A549 (cell line): ENCODE measurements at regions of chr11 and their contacts with region 1.

Region 1: DNA sequence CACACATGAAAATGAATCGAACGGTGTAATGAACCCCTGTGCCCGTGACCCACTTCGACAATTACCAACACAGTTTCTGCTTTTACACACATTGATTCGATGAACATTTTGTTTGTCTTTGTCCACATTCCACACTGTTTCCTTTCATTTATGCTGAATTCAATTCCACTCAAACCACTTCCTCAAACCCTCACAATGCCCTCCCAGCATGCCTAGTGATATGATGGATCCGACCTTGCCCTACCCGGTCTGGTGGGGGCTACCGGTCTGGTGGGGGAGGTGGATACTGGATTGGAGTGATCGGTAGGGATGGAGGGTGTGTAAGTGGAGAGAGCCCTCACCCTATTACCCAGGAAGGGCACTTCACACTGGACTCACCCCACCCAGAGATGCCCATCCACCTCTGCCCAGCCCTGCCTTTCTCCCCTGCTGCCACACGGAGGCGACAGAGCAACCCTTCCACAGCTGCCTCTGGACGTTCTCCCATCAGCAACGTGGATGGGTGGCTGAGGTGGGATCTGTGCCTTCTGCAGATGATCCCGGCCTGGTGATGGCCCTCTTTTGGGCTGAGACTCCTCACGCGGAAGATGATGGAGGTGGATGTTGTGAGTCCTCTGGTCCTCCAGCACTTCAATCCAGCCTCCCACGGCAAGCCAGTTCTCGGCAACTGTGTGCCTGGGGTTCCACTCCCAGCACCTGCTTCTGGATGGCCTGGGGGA is 33.0 kb upstream of the P2RY2 start:
- DNase-seq: peak; percentile 76 to 91
- ATAC-seq: peak; percentile 84 to 93
- H3K4me3 ChIP-seq: no peak overlapping the region
- H3K27ac ChIP-seq: peak overlapping the region; percentile 74 to 84
- H3K4me1 ChIP-seq: peaks cover 29% of the 10 kb centered on the region
- CTCF ChIP-seq: peak; percentile 80
- EP300 ChIP-seq: no peak
- POLR2A ChIP-seq: no peak
- RAD21 ChIP-seq: peak; percentile 79 to 90

Region 2: GRCh38 chr11:73141848-73142286 is 43.2 kb before region 1 on chr11:
- CTCF ChIA-PET with region 1: interaction called, 10 read pairs
- POLR2A ChIA-PET with region 1: interaction called, 3 read pairs
- DNase-seq: peak; percentile 56 to 73
- ATAC-seq: peak; percentile 65 to 70
- H3K4me3 ChIP-seq: peak overlapping the region; percentile 97
- H3K27ac ChIP-seq: peak overlapping the region; percentile 92 to 96
- H3K4me1 ChIP-seq: peaks cover 16% of the 10 kb centered on the region
- CTCF ChIP-seq: no peak
- EP300 ChIP-seq: no peak
- POLR2A ChIP-seq: peak; percentile 52; the same call in 1 of the 2 replicates
- RAD21 ChIP-seq: no peak

Region 3: DNA sequence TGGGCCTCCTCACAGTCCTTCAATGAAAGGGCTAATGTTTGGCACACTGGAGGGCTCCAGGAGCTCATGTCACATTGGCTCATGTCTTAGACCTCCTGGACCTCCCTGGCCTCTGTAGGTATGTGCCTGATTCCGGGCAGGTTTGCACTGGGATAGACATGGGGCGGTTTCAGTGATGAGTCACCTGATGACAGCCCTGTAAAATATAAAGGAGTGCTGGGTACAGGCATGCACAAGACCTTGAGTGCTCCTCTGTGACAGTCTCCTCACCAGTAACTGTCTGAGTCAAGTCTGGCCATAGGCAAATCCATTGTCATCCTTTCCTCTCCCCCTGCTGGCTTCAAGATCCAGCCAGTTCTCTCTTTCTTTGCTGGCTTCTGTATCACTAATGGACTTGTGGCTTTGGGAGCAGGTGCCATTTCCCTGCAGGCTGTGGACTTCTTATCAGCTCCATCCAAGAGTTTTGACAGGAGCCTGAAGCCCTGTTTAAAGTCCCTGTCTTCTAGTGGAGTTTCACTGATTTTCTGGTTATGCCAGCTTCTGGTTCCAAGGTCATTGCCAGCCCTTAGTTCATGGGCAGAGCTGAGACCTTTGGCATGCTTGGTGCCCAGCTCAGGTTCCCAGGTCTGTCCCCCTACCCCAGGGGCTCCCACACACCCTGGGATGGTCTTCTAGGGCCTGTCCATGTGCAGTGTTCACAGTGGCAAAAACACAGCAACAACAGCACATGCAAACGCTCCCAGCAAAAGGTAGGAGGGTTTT is 10.3 kb after region 1 on chr11:
- CTCF ChIA-PET with region 1: interaction called, 18 read pairs
- POLR2A ChIA-PET with region 1: no interaction called
- DNase-seq: peak; percentile 64 to 82
- ATAC-seq: peak; percentile 77 to 79
- H3K4me3 ChIP-seq: no peak overlapping the region
- H3K27ac ChIP-seq: peak overlapping the region; percentile 67 to 78
- H3K4me1 ChIP-seq: peaks cover 63% of the 10 kb centered on the region
- CTCF ChIP-seq: no peak
- EP300 ChIP-seq: no peak
- POLR2A ChIP-seq: no peak
- RAD21 ChIP-seq: peak in 1 of 2 experiments; percentile 1; a peak in 1 of 5 replicates

Region 4: DNA sequence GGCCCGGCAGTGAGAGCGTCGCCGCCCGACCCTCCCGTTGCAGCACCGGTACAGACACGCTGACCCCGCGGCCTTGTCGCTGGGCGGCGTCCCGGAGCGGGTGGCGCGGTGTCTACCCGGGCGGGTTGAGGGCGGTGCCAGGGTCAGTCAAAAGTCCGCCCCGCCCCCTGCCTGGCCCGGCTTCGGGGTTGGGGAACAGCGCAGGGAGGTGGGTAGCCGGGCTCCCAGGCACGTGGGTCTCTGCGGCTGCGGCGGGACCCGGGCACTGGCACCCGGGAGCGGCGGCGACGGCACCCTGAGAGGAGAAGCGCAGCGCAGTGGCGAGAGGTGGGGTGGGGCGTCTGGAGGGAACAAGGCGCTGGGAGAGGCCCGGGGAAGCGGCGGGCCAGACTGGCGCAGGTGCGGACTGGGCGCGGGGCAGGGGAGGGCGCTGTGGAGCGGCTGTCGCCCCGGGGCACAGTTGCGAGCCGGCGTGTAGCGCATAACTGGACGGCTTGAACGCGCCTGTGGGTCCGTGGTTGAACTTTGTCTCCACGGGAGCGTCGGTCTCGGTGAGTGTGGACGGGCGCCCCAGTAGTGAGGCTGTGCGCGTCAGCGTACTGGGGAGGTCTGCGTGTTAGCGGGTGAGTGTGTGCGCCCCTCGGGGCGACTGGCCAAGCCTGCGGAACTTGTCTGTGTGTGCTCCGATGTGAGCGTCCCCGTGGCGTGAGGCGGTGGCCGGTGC is 33.2 kb after region 1 on chr11 and contains the start of gene P2RY2:
- CTCF ChIA-PET with region 1: interaction called, 21 read pairs
- POLR2A ChIA-PET with region 1: no interaction called
- DNase-seq: peak; percentile 72 to 82
- ATAC-seq: peak; percentile 90 to 94
- H3K4me3 ChIP-seq: peak within 1 kb of the TSS; percentile 43
- H3K27ac ChIP-seq: peak within 1 kb of the TSS; percentile 68 to 91
- H3K4me1 ChIP-seq: peaks cover 16% of the 10 kb centered on the region
- CTCF ChIP-seq: peak; percentile 74
- EP300 ChIP-seq: no peak
- POLR2A ChIP-seq: peak; percentile 79
- RAD21 ChIP-seq: peak in 1 of 2 experiments; percentile 31; a peak in 3 of 5 replicates
- polyA plus RNA-seq, gene P2RY2: 3.7 and 5.2 TPM in 2 replicates

Region 5: DNA sequence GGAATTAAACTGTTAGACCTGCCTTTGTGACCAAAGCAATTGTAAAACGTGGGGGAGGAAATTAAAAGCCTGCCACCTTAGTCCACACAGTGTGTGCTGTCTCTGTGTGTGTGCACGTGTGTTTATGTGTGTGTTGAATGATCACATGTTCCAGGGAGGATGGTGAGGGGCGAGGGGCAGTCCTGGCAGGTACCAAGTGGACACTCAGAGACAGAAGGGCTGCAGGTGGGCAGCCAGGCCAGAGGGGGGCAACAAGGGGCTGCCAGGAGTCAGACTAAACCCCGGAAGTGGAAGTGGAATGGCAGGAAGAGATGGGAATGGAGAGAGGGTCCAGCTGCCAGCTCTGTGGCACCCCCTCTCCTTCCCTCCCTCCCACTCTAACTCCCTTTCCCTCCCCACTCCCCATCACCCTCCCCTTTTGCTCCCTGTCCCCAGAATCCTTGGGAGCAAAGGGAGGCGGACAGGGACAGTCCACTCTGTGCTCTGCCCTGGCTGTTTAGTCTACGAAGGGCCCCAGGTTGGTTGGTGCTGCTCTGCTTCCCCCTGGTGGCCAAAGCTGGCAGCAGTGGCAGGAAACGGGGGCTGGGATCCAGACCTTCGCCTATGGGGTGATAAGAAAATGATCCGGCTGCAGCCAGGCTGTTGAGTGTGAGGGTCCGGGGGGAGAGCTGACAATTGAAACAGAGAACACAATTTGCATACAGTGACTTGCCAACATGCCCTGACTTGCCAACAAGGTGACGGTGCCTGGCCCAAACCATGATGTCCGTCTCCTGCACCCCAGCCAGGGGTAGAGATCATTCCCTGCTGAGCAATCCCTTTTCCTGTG is 57.4 kb after region 1 on chr11:
- CTCF ChIA-PET with region 1: interaction called, 80 read pairs
- POLR2A ChIA-PET with region 1: interaction called, 4 read pairs
- DNase-seq: peak; percentile 76 to 90
- ATAC-seq: peak; percentile 86 to 93
- H3K4me3 ChIP-seq: no peak overlapping the region
- H3K27ac ChIP-seq: peak overlapping the region; percentile 69 to 92
- H3K4me1 ChIP-seq: peaks cover 22% of the 10 kb centered on the region; the same call in 2 of the 3 replicates
- CTCF ChIP-seq: peak; percentile 94
- EP300 ChIP-seq: no peak
- POLR2A ChIP-seq: no peak
- RAD21 ChIP-seq: peak; percentile 92 to 93

Region 6: DNA sequence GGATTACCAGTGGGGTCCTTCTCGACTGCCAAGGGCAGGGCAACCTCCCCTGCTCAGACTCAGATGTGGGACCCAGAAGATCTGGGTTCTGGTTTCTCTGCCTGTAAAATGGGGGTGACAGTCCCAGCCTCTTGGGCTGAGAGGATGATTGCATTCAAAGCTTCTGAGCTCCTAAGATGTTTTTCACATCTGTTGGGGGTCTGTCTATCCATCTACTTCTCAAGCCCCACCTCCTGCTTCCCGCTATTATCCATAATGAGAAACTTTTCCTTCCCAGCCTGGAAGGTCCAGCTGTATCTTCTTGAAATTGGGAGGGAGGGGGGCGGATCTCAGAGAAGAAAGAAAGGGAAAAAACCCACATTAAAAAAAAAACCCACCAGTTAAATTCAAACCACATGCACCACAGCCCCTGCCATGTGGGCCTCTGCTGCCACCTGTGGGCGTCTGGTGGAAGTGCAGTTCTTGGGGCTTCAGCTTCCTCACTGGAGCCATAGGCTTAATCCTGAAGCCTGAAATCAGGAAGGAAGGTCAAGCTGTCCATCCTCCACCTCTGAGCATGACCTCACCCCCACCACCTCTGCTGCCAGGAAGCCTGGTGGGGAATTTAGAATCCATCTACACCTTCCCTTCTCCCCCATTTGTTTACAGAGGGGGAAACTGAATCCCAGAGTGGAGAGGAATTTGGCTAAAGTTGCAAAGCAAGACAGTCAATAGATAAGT is 150.3 kb after region 1 on chr11:
- CTCF ChIA-PET with region 1: interaction called, 10 read pairs
- POLR2A ChIA-PET with region 1: no interaction called
- DNase-seq: peak; percentile 73 to 93
- ATAC-seq: peak; percentile 72 to 83
- H3K4me3 ChIP-seq: no peak overlapping the region
- H3K27ac ChIP-seq: peak overlapping the region; percentile 62 to 80
- H3K4me1 ChIP-seq: peaks cover 38% of the 10 kb centered on the region
- CTCF ChIP-seq: peak; percentile 97
- EP300 ChIP-seq: no peak
- POLR2A ChIP-seq: no peak
- RAD21 ChIP-seq: peak; percentile 93 to 95